ENCODE measurements at regions of chr3 and their contacts with region 1.

Region 1: GRCh38 chr3:39378088-39378487 is 5.1 kb upstream of the SLC25A38 start:
- DNase-seq: peak; percentile 58 to 69 (median 62)
- H3K4me3 ChIP-seq: no peak overlapping the region
- H3K4me3 Mint-ChIP-seq: peak overlapping the region in 1 of 8 donors; percentile 18
- H3K27ac ChIP-seq: no peak overlapping the region
- H3K27ac Mint-ChIP-seq: peak overlapping the region in 2 of 7 donors; percentile 28 to 39
- H3K4me1 ChIP-seq: peaks cover 11% of the 10 kb centered on the region
- H3K4me1 Mint-ChIP-seq: peaks cover 4 to 15% (median 8%) of the 10 kb centered on the region in 4 donors
- H3K27me3 ChIP-seq: no peaks in the 10 kb centered on the region
- H3K27me3 Mint-ChIP-seq: no peaks in the 10 kb centered on the region

Region 2: GRCh38 chr3:39189959-39190269 is 188.2 kb before region 1 on chr3:
- CTCF ChIA-PET with region 1: interaction called, 10 read pairs
- POLR2A ChIA-PET with region 1: no interaction called
- intact Hi-C with region 1: loop called (anchors 1 kb)
- DNase-seq: peak; percentile 60 to 65 (median 64)
- H3K4me3 ChIP-seq: no peak overlapping the region
- H3K4me3 Mint-ChIP-seq: no peak overlapping the region
- H3K27ac ChIP-seq: no peak overlapping the region
- H3K27ac Mint-ChIP-seq: peak overlapping the region in 6 of 7 donors; percentile 2 to 89 (median 66)
- H3K4me1 ChIP-seq: no peaks in the 10 kb centered on the region
- H3K4me1 Mint-ChIP-seq: peaks cover 0 to 7% (median 5%) of the 10 kb centered on the region in 4 donors
- H3K27me3 ChIP-seq: no peaks in the 10 kb centered on the region
- H3K27me3 Mint-ChIP-seq: peaks cover 0 to 1% of the 10 kb centered on the region in 2 donors

Region 3: DNA sequence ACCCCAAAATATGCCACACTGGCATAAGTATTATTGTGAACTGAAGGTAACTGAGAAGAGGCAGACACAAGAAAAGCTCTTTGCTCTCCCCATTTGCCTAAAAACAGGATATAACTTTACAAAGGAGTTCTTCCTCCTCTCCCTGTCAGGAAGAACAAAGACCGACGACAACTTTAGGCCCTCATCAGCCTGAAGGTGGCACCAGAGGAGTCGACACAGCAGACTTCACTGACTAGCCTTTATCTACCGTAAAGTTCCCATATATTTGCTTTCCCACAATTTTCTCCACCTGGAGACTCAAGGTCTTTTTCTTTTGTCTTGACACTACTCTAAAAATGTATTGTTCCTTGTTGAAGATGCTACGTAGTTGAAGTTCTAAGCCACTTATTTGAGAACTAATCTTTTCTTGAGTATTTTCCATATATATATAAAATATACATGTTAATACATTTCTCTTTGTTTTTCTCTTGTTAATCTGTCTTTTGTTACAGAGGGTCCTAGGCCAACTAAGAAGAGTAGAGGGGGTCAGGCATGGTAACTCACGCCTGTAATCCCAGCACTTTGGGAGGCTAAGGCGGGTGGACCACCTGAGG is 169.5 kb before region 1 on chr3:
- CTCF ChIA-PET with region 1: no interaction called
- POLR2A ChIA-PET with region 1: no interaction called
- intact Hi-C with region 1: loop called (anchors 1 kb)
- DNase-seq: peak in 4 of 5 donors; percentile 27 to 39 (median 32)
- H3K4me3 ChIP-seq: no peak overlapping the region
- H3K4me3 Mint-ChIP-seq: no peak overlapping the region
- H3K27ac ChIP-seq: no peak overlapping the region
- H3K27ac Mint-ChIP-seq: no peak overlapping the region
- H3K4me1 ChIP-seq: peaks cover 12% of the 10 kb centered on the region
- H3K4me1 Mint-ChIP-seq: peaks cover 0 to 7% (median 5%) of the 10 kb centered on the region in 4 donors
- H3K27me3 ChIP-seq: no peaks in the 10 kb centered on the region
- H3K27me3 Mint-ChIP-seq: peaks cover 4% of the 10 kb centered on the region in 2 donors

Region 4: DNA sequence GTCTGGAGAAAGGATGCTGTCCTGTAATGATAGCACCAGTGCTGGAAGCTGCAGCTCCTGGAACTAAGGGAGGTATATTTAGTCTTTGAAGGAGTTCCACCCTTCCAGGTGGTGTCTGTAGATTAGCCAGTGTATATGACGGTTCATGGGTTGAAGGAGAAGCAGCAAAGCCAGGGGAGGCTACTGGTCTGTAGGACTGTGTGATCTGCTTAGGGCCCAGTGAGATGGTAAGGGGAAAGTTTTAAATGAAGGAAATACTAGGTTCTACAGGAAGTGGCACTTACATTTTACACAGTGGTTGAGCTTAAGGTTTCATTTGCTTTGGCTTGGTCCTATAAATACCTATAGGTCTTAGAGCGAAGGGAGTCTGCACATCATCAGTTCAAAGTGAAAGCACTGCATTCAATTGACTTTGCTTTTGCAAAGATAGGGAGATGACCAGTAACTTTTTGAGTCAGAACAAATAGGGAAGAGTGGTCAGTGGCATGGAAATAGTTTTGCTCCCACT is 10.7 kb after region 1 on chr3:
- CTCF ChIA-PET with region 1: interaction called, 13 read pairs
- POLR2A ChIA-PET with region 1: interaction called, 3 read pairs
- intact Hi-C with region 1: no loop called
- DNase-seq: no peak
- H3K4me3 ChIP-seq: no peak overlapping the region
- H3K4me3 Mint-ChIP-seq: peak overlapping the region in 6 of 8 donors; percentile 26 to 63 (median 43)
- H3K27ac ChIP-seq: peak overlapping the region; percentile 25
- H3K27ac Mint-ChIP-seq: peak overlapping the region; percentile 48 to 97 (median 81)
- H3K4me1 ChIP-seq: peaks cover 55% of the 10 kb centered on the region
- H3K4me1 Mint-ChIP-seq: peaks cover 41 to 84% (median 55%) of the 10 kb centered on the region in 4 donors
- H3K27me3 ChIP-seq: no peaks in the 10 kb centered on the region
- H3K27me3 Mint-ChIP-seq: no peaks in the 10 kb centered on the region